ENCODE measurements at regions of chr22 and their contacts with region 1.

Region 1: GRCh38 chr22:46013460-46014416 is 36.8 kb upstream of the WNT7B start:
- DNase-seq: peak; percentile 63
- H3K4me3 Mint-ChIP-seq: peak overlapping the region; percentile 77
- H3K27ac Mint-ChIP-seq: peak overlapping the region; percentile 88
- H3K4me1 Mint-ChIP-seq: peaks cover 11% of the 10 kb centered on the region
- H3K27me3 Mint-ChIP-seq: peaks cover 7% of the 10 kb centered on the region

Region 2: DNA sequence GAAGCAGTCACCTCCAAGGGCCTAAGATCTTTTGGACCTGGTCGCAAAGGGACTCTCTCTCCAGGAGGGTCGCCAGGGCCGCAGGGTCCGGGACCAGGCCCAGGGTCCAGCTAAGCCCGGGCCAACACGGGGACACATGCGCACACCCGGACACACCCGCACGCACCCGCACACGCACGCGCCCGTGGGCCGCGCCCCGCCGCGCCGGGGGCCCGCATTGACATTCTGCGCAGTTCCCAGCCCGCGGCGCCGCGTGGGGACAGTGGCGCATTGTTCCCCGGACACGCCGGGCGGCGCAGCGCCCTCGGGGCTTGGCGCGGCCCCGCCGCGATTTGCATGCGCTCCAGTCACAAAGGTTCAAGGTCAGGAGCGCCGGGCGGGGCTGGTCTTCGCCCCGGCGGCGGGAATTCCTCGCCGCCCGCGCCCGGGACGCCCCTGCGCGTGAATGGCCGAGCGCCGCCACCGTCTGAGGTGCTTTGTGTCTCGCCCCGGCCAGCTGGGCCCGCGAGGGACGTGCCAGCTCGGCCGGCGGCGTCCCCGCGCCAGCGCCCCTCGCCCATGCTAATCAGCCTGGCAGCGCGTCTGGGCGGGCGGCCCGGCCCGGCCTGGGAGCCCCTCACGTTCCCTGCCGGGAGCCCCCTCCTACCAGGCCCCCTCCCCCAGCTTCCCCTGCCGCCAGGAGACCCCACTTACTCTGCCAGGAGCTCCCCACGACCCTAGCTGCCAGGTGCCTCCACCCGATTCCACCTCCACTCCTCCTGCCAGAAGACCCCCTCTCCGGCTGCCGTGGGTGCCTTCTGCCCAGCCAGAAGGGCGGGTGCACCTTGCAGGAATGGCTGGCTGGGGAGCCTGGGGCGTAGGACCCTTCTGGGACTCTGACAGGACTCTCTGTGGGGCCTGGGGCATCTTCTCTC is 13.7 kb after region 1 on chr22:
- CTCF ChIA-PET with region 1: interaction called, 20 read pairs
- POLR2A ChIA-PET with region 1: interaction called, 3 read pairs
- DNase-seq: no peak
- H3K4me3 Mint-ChIP-seq: no peak overlapping the region
- H3K27ac Mint-ChIP-seq: no peak overlapping the region
- H3K4me1 Mint-ChIP-seq: peaks cover 6% of the 10 kb centered on the region
- H3K27me3 Mint-ChIP-seq: peaks cover 33% of the 10 kb centered on the region

Region 3: GRCh38 chr22:46116491-46116958 is 102.8 kb after region 1 on chr22:
- CTCF ChIA-PET with region 1: interaction called, 35 read pairs
- POLR2A ChIA-PET with region 1: no interaction called
- DNase-seq: peak; percentile 89
- H3K4me3 Mint-ChIP-seq: no peak overlapping the region
- H3K27ac Mint-ChIP-seq: no peak overlapping the region
- H3K4me1 Mint-ChIP-seq: peaks cover 4% of the 10 kb centered on the region
- H3K27me3 Mint-ChIP-seq: no peaks in the 10 kb centered on the region

Region 4: DNA sequence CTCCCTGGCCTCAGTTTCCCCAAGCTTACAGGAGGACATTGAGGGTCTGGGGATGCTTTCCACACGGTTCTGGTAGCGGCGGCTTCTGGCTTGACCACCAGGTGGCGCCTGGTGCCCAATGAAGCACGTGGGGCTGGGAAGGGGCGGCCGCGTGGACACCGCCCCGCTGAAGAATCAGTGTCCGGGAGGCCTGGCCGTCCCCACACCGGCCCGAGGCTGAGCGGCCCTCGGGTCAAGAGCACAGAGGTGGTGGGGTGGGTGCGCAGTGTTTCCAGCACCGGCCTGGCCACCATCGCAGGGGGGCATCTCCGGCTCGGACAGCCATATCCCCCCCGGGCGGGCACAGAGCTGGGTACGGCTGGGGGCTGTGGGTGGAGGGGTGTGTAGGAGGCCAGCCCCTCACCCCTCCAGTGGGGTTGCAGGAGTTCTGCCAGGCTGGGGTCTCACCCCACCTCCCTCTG is 108.8 kb after region 1 on chr22:
- CTCF ChIA-PET with region 1: interaction called, 35 read pairs
- POLR2A ChIA-PET with region 1: no interaction called
- DNase-seq: peak; percentile 72
- H3K4me3 Mint-ChIP-seq: no peak overlapping the region
- H3K27ac Mint-ChIP-seq: no peak overlapping the region
- H3K4me1 Mint-ChIP-seq: peaks cover 4% of the 10 kb centered on the region
- H3K27me3 Mint-ChIP-seq: no peaks in the 10 kb centered on the region

Measured in activated CD4-positive, alpha-beta T cell treated with anti-CD3 and anti-CD28 coated beads, Interleukin-2, amount 10 ng/mL, durations not matched to agents 7 days and 5 days (primary cell).